ENCODE measurements at regions of chr15 and their contacts with region 1.

Region 1: DNA sequence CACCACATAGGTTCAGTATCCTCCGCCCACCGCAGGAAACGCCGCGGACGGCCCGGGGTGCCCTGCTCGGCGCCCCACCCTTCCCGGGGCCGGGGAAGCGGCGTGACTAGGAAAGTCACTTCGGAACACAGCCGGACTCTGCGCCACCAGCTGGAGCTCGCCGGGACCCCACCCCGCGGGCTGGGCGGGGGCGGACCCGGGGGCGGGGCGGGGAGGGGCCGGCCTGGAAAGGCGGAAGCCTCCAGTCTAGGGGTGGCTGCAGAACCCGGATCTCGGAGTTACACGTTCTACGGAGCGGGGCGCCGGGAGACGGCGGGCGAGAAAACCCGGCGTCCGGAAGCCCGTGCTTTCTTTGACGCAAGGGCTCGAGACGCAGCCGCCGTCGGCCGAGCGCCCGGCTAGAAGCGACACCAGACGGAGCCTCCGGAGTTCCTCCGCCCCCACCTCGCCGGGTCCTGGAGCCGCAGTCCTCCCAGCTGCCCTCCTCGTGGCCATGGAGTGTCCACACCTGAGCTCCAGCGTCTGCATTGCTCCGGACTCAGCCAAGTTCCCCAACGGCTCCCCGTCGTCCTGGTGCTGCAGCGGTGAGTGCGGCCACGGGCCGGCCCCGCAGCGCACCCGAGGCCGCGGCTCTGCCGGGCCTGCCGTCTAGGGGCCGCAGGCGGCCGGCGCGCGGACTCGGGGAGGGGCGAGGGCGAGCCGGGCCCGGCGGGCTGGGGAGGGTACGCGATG is at the start of gene USP3:
- DNase-seq: peak; percentile 95
- ATAC-seq: peak; percentile 65
- H3K4me3 Mint-ChIP-seq: peak within 1 kb of the TSS; percentile 90
- H3K27ac Mint-ChIP-seq: peak within 1 kb of the TSS; percentile 93
- H3K4me1 Mint-ChIP-seq: peaks cover 73% of the 10 kb centered on the region
- H3K27me3 Mint-ChIP-seq: no peaks in the 10 kb centered on the region
- total RNA-seq, gene USP3: 50.5 to 67.1 TPM

Region 2: GRCh38 chr15:63277038-63277892 is 227.1 kb before region 1 on chr15 and contains the start of gene APH1B:
- CTCF ChIA-PET with region 1: no interaction called
- DNase-seq: peak; percentile 81
- ATAC-seq: peak; percentile 95
- H3K4me3 Mint-ChIP-seq: peak within 1 kb of the TSS; percentile 76
- H3K27ac Mint-ChIP-seq: peak within 1 kb of the TSS; percentile 72
- H3K4me1 Mint-ChIP-seq: peaks cover 37% of the 10 kb centered on the region
- H3K27me3 Mint-ChIP-seq: no peaks in the 10 kb centered on the region
- total RNA-seq, gene APH1B: 12.3 to 13.0 TPM

Region 3: GRCh38 chr15:63481105-63481810 is 23.2 kb before region 1 on chr15:
- CTCF ChIA-PET with region 1: interaction called, 67 read pairs
- DNase-seq: no peak
- ATAC-seq: peak; percentile 37
- H3K4me3 Mint-ChIP-seq: no peak overlapping the region
- H3K27ac Mint-ChIP-seq: no peak overlapping the region
- H3K4me1 Mint-ChIP-seq: peaks cover 51% of the 10 kb centered on the region
- H3K27me3 Mint-ChIP-seq: no peaks in the 10 kb centered on the region

Region 4: DNA sequence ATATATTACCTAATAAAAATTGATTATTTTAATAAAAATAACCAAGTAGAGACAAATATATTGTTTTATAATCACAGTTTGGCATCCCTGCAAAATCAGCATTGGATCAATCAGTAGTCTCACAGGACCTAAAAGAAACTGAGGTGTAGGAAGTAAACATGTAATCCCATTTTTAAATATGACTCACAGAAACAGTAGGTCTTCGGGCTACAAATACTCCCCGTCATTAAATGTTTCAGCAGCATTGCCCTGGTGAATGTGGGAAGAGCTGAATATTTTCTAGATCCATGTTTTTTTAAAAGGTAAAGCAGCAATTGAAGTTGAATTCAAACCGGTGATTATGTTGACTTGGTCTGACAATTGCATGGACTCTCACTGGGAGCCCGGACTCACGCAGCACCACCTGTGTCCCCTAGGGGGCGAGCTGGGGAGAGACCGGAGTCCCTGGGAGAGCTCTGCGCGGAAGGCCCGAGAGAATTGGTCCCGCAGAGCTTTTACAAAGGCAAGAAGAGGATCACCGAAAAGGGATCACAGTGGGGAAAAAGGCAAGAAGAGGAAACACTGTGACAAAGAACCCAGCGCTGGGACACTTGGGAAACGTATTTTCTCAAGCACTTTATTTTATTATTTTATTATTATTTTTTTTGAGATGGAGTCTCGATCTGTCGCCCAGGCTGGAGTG is 17.2 kb before region 1 on chr15:
- CTCF ChIA-PET with region 1: interaction called, 88 read pairs
- DNase-seq: peak; percentile 94
- ATAC-seq: peak; percentile 96
- H3K4me3 Mint-ChIP-seq: peak overlapping the region; percentile 53
- H3K27ac Mint-ChIP-seq: peak overlapping the region; percentile 70
- H3K4me1 Mint-ChIP-seq: peaks cover 51% of the 10 kb centered on the region
- H3K27me3 Mint-ChIP-seq: peaks cover 7% of the 10 kb centered on the region

Region 5: GRCh38 chr15:63519548-63520178 is 15.2 kb after region 1 on chr15:
- CTCF ChIA-PET with region 1: interaction called, 13 read pairs
- DNase-seq: no peak
- ATAC-seq: no peak
- H3K4me3 Mint-ChIP-seq: no peak overlapping the region
- H3K27ac Mint-ChIP-seq: no peak overlapping the region
- H3K4me1 Mint-ChIP-seq: peaks cover 44% of the 10 kb centered on the region
- H3K27me3 Mint-ChIP-seq: no peaks in the 10 kb centered on the region

Region 6: DNA sequence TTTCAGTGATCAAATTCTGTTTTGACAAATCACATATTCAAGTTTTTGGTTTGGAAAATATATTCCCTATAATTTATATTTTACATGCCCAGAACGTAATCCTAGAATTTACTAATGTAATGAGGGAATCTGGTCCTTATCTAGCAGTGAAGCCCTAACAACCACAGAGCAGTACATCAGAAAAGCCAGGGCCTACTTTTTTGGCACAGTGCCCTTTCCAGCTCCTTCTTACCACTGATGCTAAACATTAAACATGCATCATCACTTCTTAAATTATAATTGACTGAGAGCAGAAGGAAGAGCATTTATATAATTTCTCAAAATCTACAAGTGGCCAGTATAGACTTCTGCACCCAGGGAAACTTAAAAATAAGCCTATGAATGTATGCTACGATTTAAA is 159.5 kb after region 1 on chr15:
- CTCF ChIA-PET with region 1: no interaction called
- DNase-seq: no peak
- ATAC-seq: no peak
- H3K4me3 Mint-ChIP-seq: no peak overlapping the region
- H3K27ac Mint-ChIP-seq: no peak overlapping the region
- H3K4me1 Mint-ChIP-seq: peaks cover 13% of the 10 kb centered on the region
- H3K27me3 Mint-ChIP-seq: no peaks in the 10 kb centered on the region